ENCODE measurements at regions of chr4 and their contacts with region 1.

Region 1: GRCh38 chr4:11548597-11549082 is 119.9 kb upstream of the HS3ST1 start:
- DNase-seq: peak; percentile 29 to 77
- H3K4me3 ChIP-seq: 0 out of 2 replicates have a peak overlapping the region, but pooled peaks have one; percentile 10
- H3K27ac ChIP-seq: peak overlapping the region; percentile 93
- H3K4me1 ChIP-seq: peaks cover 29% of the 10 kb centered on the region
- H3K27me3 ChIP-seq: no peaks in the 10 kb centered on the region
- CTCF ChIP-seq: no peak

Region 2: GRCh38 chr4:11397819-11398610 is 150.6 kb before region 1 on chr4:
- CTCF ChIA-PET with region 1: no interaction called
- POLR2A ChIA-PET with region 1: no interaction called
- intact Hi-C with region 1: no loop called
- DNase-seq: no peak
- H3K4me3 ChIP-seq: no peak overlapping the region
- H3K27ac ChIP-seq: peak overlapping the region; percentile 61
- H3K4me1 ChIP-seq: peaks cover 18% of the 10 kb centered on the region
- H3K27me3 ChIP-seq: no peaks in the 10 kb centered on the region
- CTCF ChIP-seq: no peak

Region 3: GRCh38 chr4:11603591-11604194 is 55.1 kb after region 1 on chr4:
- CTCF ChIA-PET with region 1: no interaction called
- POLR2A ChIA-PET with region 1: no interaction called
- intact Hi-C with region 1: no loop called
- DNase-seq: no peak
- H3K4me3 ChIP-seq: no peak overlapping the region
- H3K27ac ChIP-seq: no peak overlapping the region
- H3K4me1 ChIP-seq: no peaks in the 10 kb centered on the region
- H3K27me3 ChIP-seq: no peaks in the 10 kb centered on the region
- CTCF ChIP-seq: no peak

Region 4: DNA sequence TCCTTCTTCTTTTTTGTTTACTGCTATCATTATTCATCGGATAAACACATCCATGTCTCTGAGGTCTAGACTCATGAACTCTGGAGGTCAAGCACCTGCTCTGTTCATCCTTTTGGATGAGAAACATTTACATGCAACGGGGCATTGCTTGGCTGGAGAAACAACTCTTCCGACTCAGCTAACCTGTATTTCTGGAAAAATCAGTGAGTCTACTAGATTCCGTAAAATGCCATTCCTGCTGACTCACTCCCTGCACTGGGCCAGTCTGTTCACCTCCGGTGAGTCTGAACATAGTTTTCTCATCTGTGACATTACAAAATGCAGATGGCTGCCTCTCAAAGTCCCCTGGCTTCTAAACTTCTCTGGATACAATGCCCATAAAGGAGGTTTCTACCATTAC is 65.8 kb after region 1 on chr4:
- CTCF ChIA-PET with region 1: no interaction called
- POLR2A ChIA-PET with region 1: no interaction called
- intact Hi-C with region 1: loop called (anchors 2 kb)
- DNase-seq: peak; percentile 80 to 96
- H3K4me3 ChIP-seq: peak overlapping the region; percentile 46
- H3K27ac ChIP-seq: peak overlapping the region; percentile 98
- H3K4me1 ChIP-seq: peaks cover 48% of the 10 kb centered on the region
- H3K27me3 ChIP-seq: no peaks in the 10 kb centered on the region
- CTCF ChIP-seq: no peak

Measured in PC-9 (cell line).